ENCODE measurements at regions of chr5 and their contacts with region 1.

Region 1: DNA sequence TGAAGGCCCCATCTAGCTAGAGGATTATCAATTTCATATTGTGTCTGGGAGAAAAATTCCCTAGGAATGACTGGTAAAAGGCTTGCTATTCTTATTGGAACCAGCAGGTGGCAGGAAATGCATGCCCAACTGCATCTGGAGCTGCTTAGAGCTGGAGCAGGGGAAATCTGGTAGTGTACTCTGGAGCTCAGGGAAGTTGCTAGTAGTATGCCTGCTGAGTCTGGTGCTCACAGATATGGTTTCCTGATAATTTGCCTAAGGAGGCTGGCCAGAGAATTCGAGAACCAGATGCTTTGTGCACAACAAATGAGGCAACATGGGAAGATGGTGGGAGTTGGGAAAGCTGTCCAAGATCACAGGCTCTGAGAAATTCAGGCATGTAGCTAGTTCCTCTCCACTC is 53.7 kb downstream of the G3BP1 start:
- DNase-seq: no peak
- H3K4me3 Mint-ChIP-seq: no peak overlapping the region
- H3K27ac Mint-ChIP-seq: no peak overlapping the region
- H3K4me1 Mint-ChIP-seq: peaks cover under 1% of the 10 kb centered on the region
- H3K27me3 Mint-ChIP-seq: no peaks in the 10 kb centered on the region

Region 2: GRCh38 chr5:151628112-151628823 is 197.2 kb before region 1 on chr5:
- intact Hi-C with region 1: no loop called
- DNase-seq: no peak
- H3K4me3 Mint-ChIP-seq: no peak overlapping the region
- H3K27ac Mint-ChIP-seq: no peak overlapping the region
- H3K4me1 Mint-ChIP-seq: no peaks in the 10 kb centered on the region
- H3K27me3 Mint-ChIP-seq: peaks cover 6% of the 10 kb centered on the region

Region 3: GRCh38 chr5:151862811-151863472 is 37.5 kb after region 1 on chr5:
- intact Hi-C with region 1: no loop called
- DNase-seq: no peak
- H3K4me3 Mint-ChIP-seq: no peak overlapping the region
- H3K27ac Mint-ChIP-seq: no peak overlapping the region
- H3K4me1 Mint-ChIP-seq: no peaks in the 10 kb centered on the region
- H3K27me3 Mint-ChIP-seq: no peaks in the 10 kb centered on the region

Region 4: GRCh38 chr5:152142840-152143469 is 317.5 kb after region 1 on chr5:
- intact Hi-C with region 1: loop called (anchors 1 kb)
- DNase-seq: peak; percentile 17
- H3K4me3 Mint-ChIP-seq: no peak overlapping the region
- H3K27ac Mint-ChIP-seq: no peak overlapping the region
- H3K4me1 Mint-ChIP-seq: no peaks in the 10 kb centered on the region
- H3K27me3 Mint-ChIP-seq: no peaks in the 10 kb centered on the region